Cardiac septum (tissue), 1 donor: ENCODE measurements at regions of chr2 and their contacts with region 1.

Region 1: GRCh38 chr2:236663287-236664101 is 93.9 kb downstream of the ACKR3 start:
- DNase-seq: no peak

Region 2: DNA sequence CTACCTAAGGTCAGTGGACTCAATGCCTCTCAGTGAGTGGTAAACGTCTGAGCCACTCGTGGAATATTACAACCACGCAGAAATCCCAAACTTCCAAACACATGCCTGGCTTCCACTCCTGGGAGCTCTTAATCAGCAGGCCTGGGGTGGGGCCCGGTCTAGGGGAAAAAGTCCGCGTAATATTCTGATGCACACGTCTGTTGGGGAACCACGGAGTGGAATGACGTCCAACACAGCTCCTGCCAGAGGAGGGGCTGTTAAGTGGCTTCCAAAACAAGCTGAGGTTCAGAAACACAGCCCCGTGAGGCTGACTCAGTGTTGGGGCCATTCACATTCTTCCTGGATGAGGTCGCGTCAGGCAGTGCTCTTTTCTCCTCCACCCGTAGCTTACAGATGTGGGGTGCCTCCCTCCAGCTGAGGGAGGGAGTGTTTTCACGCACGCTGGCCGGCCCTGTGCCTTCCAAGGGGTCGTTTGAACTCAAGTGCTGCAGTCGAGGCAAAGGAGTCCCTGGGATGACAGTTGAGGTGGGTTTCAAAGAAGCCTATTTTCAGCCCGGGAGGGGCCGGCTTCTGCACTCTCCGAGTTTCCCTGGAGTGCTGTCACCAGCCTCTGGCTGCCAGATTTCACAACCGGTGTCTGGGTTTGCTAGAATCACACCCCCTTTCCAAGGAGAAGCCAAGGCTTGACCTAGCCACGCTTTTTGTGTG is 20.8 kb before region 1 on chr2:
- intact Hi-C with region 1: loop called (anchors 2 kb)
- DNase-seq: peak; percentile 88

Region 3: DNA sequence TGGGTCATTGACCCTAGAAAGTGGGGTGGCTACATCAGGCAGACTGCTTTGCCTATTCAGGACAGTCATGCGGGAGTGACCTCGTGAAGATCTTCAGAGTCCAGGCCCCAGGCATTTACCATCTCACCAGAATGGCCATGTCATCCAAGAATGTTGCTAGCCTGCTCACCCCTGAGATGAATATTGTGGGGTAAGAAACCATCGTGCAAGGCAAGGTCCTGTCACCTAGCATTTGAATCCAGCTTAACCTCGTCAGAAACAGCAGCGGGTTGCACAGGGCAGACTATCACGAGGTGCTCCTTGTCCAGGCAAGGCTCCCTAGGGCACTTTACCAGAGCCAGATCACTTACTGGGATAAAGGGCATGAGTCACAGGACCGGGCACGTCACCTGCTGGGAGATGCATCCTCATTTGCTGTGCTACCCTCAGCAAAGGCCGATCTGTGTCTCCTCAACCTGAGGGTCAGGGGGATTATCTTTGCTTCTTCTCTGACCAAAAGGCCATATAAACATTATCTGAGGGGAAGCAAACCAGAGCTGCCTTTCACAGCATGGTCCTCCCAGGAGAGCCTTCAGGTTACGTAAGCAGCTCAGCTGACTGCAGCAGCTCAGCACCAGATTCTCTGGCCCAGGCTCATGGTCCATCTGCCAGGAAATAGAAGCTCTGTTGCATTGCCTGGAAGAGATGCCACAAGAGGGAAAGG is 68.5 kb after region 1 on chr2:
- intact Hi-C with region 1: loop called (anchors 5 kb)
- DNase-seq: no peak